ENCODE measurements at regions of chr11 and their contacts with region 1.

Region 1: GRCh38 chr11:119999220-119999619 is 138.7 kb downstream of the TRIM29 start:
- DNase-seq: peak; percentile 6
- H3K4me3 ChIP-seq: no peak overlapping the region
- H3K27ac ChIP-seq: no peak overlapping the region
- H3K4me1 ChIP-seq: peaks cover 9% of the 10 kb centered on the region
- H3K27me3 ChIP-seq: no peaks in the 10 kb centered on the region
- CTCF ChIP-seq: peak; percentile 40 to 56

Region 2: DNA sequence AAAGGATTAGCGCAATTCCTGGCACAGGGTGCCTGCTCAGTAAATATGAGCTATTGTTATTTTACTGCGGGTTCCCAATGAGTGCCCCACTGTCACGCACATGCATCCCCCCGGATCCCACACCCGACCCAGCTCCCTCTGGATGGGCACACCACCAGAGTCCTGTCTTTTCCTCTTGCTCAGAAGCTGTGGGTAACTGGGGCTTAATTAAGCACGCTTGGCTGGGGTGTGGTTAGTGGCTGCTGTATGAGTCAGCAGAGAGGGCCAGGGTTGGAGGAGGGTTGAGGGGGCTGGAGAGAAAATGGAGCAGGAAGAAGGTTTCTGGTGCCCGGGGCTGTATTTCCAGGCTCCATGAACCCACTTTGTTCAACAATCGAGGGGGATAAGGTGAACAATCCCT is 239.9 kb before region 1 on chr11:
- CTCF ChIA-PET with region 1: no interaction called
- dilution Hi-C with region 1: no loop called
- in situ Hi-C with region 1: loop called in 1 of 2 experiments (anchors 25 kb)
- intact Hi-C with region 1: loop called (anchors 10 kb)
- DNase-seq: peak; percentile 70
- H3K4me3 ChIP-seq: no peak overlapping the region
- H3K27ac ChIP-seq: no peak overlapping the region
- H3K4me1 ChIP-seq: peaks cover 31% of the 10 kb centered on the region
- H3K27me3 ChIP-seq: no peaks in the 10 kb centered on the region
- CTCF ChIP-seq: no peak

Region 3: DNA sequence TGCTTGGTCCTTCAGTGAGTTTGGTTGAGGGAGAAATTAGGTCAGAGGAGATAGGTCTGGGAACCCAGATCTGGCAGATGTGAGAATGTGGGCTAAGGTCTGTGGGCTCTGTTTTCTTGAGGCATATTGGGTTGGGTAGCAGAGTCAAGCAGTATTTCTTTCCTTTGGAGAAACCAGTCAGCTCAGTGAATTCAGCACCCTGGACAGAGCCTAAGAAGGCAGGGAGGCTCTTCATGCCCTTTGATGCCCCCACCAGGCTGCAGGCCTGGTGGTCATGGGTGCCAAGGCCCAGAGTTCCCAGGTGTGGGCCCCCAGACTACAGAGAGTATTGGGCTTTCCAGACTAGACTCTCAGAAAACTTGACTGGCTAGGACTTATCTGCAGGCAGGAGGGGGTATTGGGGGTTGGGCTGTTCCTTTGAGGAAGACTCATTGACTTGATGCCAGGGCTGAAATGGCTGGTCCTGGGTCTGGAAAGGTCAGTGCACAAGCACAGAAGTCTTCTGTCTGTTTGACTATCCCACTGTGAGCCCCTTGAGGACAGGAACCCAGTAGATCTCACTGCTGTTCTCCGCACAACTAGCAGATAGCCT is 225.0 kb before region 1 on chr11:
- CTCF ChIA-PET with region 1: no interaction called
- dilution Hi-C with region 1: no loop called
- in situ Hi-C with region 1: loop called in 1 of 2 experiments (anchors 25 kb)
- intact Hi-C with region 1: no loop called
- DNase-seq: peak; percentile 29
- H3K4me3 ChIP-seq: no peak overlapping the region
- H3K27ac ChIP-seq: no peak overlapping the region
- H3K4me1 ChIP-seq: no peaks in the 10 kb centered on the region
- H3K27me3 ChIP-seq: no peaks in the 10 kb centered on the region
- CTCF ChIP-seq: no peak